GM10248 (cell line): ENCODE measurements at regions of chr10 and their contacts with region 1.

Region 1: DNA sequence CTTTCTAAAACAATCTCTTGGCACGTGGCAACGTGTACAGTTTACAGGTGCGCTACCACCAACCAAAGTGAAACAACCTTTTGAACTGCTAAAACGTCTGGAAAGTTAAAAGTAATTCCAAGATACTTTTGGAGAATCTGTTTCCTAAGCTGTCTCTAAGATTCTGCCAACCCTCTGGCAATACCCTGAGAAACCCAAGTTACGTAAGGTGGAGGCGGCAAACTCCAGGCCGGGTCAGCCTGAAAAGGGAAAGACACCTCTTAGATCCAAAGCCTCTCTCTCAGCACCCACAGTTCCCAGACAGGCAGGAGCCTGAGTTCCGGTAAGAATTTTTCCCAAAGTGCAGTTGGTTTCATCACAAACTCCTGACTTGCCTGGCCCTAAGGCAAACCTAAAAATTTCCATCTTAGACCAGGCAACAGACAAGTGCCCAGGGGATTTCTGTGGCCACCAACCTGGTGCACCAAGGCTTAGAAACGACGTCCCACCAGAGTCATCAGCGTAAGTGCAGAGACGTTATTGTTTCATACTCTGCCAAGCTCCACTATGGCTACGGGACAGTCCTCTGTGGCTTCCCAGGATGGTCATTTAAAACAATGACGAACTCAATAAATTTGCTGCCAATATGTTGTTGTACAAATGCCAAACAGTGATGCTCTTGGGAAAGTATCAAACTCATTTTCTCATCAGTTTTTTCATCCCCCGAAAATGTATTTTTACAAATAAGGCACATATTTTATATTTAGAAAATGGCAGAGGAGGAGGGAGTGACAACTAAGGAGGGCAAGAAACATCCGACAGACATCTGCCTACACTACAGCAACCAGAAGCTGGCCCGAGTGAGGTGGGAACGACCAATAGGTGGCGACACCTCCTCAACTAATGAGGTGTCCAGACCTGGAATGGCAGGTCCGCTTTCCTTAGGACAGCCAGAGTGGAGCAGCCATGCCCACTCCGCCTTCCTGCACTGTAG is 205.8 kb upstream of the FRMD4A start:
- DNase-seq: peak; percentile 45
- CTCF ChIP-seq: peak; percentile 73

Region 2: DNA sequence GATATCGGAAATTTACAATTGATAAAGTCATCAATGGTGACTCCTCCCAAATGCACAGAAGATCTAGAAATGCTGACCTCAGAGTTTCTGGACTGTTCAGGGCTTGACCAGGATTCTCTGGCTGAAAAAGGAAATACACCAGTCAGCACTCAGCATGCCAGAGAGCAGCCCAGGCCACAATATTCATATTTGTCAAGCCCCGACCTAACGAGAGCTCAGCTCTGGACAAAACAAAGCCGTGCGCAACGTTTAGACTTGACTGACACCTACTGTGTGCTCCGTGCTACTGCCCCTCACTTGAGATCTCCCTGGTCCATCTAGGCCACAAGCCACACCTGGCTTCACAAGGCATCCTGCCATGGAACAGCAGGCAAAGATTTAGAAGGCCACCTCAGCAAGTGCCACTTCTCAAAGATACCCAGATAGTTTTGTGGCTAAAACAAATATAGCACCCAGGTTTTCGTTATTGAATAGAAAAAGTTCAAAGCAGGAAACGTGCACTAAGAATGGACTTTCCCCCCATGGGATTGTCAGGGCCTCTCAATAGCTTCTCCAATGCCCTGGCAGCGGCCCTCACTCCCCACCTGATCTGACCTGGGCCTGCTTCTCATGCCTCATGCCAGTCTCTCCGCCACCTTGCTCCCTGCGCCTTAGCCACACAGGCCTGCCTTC is 19.9 kb after region 1 on chr10:
- CTCF ChIA-PET with region 1: interaction called, 50 read pairs
- POLR2A ChIA-PET with region 1: no interaction called
- DNase-seq: peak; percentile 69
- CTCF ChIP-seq: peak; percentile 39

Region 3: GRCh38 chr10:14822879-14823755 is 286.6 kb after region 1 on chr10:
- CTCF ChIA-PET with region 1: interaction called, 17 read pairs
- POLR2A ChIA-PET with region 1: no interaction called
- DNase-seq: peak; percentile 58
- CTCF ChIP-seq: peak; percentile 77

Region 4: DNA sequence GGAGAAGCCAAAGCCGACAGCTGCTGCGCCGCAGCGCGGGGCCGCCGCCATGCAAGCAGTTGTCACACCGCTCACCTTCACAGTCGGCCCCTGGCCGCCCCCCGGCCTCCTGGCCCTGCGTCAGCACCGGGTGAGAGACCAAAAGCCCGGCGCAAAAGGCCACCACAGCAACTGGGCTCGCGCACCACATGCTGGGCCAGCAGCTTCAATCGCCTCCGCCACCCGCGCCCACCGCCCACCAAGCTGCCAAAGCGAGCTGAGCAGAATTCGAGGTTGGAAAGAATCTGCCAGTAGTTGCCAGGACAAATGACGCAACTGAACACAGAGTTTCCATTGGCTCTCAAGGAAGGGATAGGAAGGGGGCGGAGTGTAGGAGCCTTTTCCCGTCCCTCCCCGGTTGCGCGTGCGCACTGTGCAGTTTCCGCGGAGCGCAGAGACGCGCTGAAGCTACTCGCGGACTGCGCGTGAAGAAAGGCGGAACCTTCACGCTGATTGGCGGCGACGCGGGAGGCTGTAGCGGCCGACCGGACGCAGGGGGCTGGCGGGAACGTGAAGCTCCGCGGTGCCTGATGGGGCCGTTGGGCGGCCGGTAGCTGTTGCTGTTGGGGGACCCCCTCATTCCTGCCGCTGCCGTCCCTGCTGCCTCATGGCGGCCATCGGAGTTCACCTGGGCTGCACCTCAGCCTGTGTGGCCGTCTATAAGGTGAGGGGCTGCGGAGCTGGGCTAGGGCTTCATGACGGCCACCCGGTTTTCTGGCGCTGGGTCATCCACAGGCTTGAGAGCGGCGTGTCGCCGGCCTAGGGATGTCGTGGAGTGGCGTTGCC is 301.4 kb after region 1 on chr10 and contains the starts of genes CDNF, HSPA14 and MSANTD7:
- CTCF ChIA-PET with region 1: interaction called, 13 read pairs
- POLR2A ChIA-PET with region 1: no interaction called
- DNase-seq: peak; percentile 99
- CTCF ChIP-seq: no peak

Region 5: GRCh38 chr10:14954001-14954770 is 417.7 kb after region 1 on chr10 and contains the start of gene DCLRE1C:
- CTCF ChIA-PET with region 1: interaction called, 13 read pairs
- POLR2A ChIA-PET with region 1: no interaction called
- DNase-seq: peak; percentile 91
- CTCF ChIP-seq: no peak